ENCODE measurements at regions of chr2 and their contacts with region 1.

Region 1: GRCh38 chr2:101036562-101037457 is 34.7 kb downstream of the RPL31 start:
- DNase-seq: no peak
- ATAC-seq: peak in 1 of 4 donors; percentile 45
- H3K4me3 ChIP-seq: no peak overlapping the region
- H3K27ac ChIP-seq: no peak overlapping the region
- H3K4me1 ChIP-seq: no peaks in the 10 kb centered on the region
- H3K27me3 ChIP-seq: no peaks in the 10 kb centered on the region
- CTCF ChIP-seq: peak in 3 of 4 donors; percentile 17 to 30 (median 19)

Region 2: DNA sequence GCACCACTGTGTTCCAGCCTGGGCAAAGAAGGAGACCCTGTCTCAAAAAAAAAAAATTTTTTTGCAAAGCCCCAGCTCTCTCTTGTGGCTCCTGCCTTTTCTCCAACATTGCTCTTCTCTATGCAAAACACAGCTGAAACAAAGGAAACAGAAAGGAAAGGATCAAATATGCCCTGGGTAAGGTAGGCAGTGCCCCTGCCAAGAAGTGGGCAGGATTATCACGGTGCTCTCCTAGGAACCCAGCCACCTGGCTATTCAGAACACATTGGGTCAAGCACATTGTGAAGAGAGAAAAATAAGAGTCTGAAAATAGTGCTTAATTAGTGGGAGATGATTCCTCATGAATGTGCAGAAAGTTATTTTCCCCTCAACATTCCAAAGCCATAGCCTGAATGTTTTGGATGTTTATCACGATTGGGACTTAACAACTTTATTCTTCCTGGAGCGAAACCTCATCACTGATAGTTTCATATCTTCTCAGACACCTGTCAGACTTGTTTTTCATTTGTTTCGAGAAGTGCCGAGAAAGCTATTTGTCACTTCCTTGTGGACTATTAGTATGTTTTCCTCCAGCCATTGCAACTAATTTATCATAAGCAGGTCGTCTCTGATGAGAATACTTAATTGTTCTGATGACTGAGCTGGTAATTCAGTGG is 77.5 kb before region 1 on chr2:
- intact Hi-C with region 1: no loop called
- DNase-seq: no peak
- ATAC-seq: peak; percentile 37 to 59 (median 46)
- H3K4me3 ChIP-seq: no peak overlapping the region
- H3K27ac ChIP-seq: peak overlapping the region in 1 of 4 donors; percentile 27
- H3K4me1 ChIP-seq: peaks cover 14 to 24% (median 19%) of the 10 kb centered on the region in 3 donors
- H3K27me3 ChIP-seq: no peaks in the 10 kb centered on the region
- CTCF ChIP-seq: no peak

Region 3: DNA sequence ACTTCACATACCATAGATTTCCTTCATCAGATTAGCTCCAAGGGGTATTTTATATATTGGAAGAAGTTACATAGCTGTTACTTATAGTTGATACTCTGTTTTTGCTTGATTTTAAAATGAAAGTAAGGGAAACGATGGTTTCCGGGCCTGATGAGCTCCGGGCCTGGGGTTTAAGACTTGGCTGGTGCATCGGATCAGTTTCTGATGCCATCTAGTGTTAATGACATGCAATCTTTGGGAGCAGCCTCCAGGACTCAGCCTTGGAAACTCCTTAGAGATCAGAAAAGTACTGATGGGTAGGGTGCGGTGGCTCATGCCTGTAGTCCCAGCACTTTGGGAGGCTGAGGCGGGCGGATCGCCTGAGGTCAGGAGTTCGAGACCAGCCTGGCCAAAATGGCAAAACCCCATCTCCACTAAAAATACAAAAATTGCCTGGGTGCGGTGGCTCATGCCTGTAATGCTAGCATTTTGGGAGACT is 168.8 kb after region 1 on chr2:
- intact Hi-C with region 1: loop called in 1 of 3 experiments (anchors 10 kb)
- DNase-seq: peak in 4 of 6 donors; percentile 41 to 68 (median 46)
- ATAC-seq: peak; percentile 92 to 98 (median 98)
- H3K4me3 ChIP-seq: peak overlapping the region in 1 of 4 donors; percentile 13
- H3K27ac ChIP-seq: no peak overlapping the region
- H3K4me1 ChIP-seq: peaks cover 0 to 5% (median 3%) of the 10 kb centered on the region in 3 donors
- H3K27me3 ChIP-seq: no peaks in the 10 kb centered on the region
- CTCF ChIP-seq: peak in 2 of 4 donors; percentile 28 to 42